ENCODE measurements at regions of chr2 and their contacts with region 1.

Region 1: GRCh38 chr2:29196792-29197788 is 81.9 kb downstream of the CLIP4 start:
- DNase-seq: peak; percentile 65 to 87
- ATAC-seq: peak; percentile 84 to 97 (median 95)
- H3K4me3 ChIP-seq: no peak overlapping the region
- H3K4me3 Mint-ChIP-seq: no peak overlapping the region
- H3K27ac ChIP-seq: no peak overlapping the region
- H3K27ac Mint-ChIP-seq: no peak overlapping the region
- H3K4me1 ChIP-seq: no peaks in the 10 kb centered on the region
- H3K4me1 Mint-ChIP-seq: peaks cover 5 to 6% of the 10 kb centered on the region in 2 donors
- H3K27me3 ChIP-seq: no peaks in the 10 kb centered on the region
- H3K27me3 Mint-ChIP-seq: no peaks in the 10 kb centered on the region
- CTCF ChIP-seq: peak; percentile 85

Region 2: DNA sequence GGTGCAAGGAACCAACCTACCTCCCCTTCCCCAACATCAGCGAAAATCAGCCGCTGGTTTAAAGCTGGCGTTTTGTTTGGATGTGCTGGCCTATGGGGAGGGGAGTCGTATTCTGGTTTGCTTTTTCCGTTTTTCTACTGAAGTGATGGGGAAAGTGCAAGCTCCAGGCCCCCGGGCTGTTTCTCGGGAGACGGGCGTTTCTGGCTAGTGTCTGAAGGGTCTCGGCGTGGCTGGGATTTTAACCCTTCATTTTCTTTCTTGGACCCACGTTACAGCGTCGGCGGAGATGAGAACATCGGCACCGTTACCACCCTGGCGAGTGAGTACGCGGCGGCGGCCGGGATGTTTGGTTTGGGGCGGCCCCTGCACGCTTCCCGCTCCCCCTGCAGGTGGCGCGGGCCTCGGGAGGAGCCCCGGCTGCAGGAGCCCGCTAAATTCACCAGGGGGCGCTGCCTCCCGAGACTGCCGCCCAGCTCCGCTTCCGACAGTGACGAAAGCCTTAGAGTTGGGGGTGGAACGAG is 630.5 kb before region 1 on chr2:
- intact Hi-C with region 1: loop called (anchors 2 kb)
- DNase-seq: peak; percentile 92 to 94
- ATAC-seq: peak; percentile 98 to 99 (median 99)
- H3K4me3 ChIP-seq: peak overlapping the region; percentile 95
- H3K4me3 Mint-ChIP-seq: peak overlapping the region; percentile 91
- H3K27ac ChIP-seq: peak overlapping the region; percentile 17
- H3K27ac Mint-ChIP-seq: peak overlapping the region; percentile 68 to 93
- H3K4me1 ChIP-seq: peaks cover 14% of the 10 kb centered on the region
- H3K4me1 Mint-ChIP-seq: peaks cover 5 to 9% of the 10 kb centered on the region in 2 donors
- H3K27me3 ChIP-seq: no peaks in the 10 kb centered on the region
- H3K27me3 Mint-ChIP-seq: peaks cover 0 to 11% of the 10 kb centered on the region in 2 donors
- CTCF ChIP-seq: peak; percentile 99

Region 3: DNA sequence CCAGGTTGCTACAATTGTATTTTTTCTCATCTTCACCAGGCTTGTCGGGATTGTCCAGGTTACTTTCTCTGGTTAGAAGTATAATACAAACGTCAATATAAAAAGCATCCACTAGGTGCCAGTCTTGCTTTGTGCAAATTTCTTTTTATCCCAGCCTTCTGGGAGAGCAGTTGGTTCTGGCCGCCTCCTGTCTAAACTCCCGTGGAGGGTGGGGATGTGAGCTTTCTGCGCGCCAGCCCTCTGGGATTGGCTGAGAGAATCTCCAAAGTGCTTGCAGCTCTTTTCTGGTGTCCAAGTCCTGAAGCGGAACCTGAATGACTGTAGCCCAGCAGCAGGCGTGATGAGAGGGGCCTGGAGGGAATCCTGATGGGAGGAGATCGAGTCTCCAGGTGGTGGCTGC is 238.4 kb before region 1 on chr2:
- intact Hi-C with region 1: loop called (anchors 1 kb)
- DNase-seq: peak; percentile 25 to 78
- ATAC-seq: peak; percentile 63 to 94 (median 74)
- H3K4me3 ChIP-seq: no peak overlapping the region
- H3K4me3 Mint-ChIP-seq: no peak overlapping the region
- H3K27ac ChIP-seq: no peak overlapping the region
- H3K27ac Mint-ChIP-seq: peak overlapping the region in 1 of 2 donors; percentile 25
- H3K4me1 ChIP-seq: peaks cover 6% of the 10 kb centered on the region
- H3K4me1 Mint-ChIP-seq: peaks cover 6 to 12% of the 10 kb centered on the region in 2 donors
- H3K27me3 ChIP-seq: no peaks in the 10 kb centered on the region
- H3K27me3 Mint-ChIP-seq: peaks cover 0 to 3% of the 10 kb centered on the region in 2 donors
- CTCF ChIP-seq: peak; percentile 82

Region 4: DNA sequence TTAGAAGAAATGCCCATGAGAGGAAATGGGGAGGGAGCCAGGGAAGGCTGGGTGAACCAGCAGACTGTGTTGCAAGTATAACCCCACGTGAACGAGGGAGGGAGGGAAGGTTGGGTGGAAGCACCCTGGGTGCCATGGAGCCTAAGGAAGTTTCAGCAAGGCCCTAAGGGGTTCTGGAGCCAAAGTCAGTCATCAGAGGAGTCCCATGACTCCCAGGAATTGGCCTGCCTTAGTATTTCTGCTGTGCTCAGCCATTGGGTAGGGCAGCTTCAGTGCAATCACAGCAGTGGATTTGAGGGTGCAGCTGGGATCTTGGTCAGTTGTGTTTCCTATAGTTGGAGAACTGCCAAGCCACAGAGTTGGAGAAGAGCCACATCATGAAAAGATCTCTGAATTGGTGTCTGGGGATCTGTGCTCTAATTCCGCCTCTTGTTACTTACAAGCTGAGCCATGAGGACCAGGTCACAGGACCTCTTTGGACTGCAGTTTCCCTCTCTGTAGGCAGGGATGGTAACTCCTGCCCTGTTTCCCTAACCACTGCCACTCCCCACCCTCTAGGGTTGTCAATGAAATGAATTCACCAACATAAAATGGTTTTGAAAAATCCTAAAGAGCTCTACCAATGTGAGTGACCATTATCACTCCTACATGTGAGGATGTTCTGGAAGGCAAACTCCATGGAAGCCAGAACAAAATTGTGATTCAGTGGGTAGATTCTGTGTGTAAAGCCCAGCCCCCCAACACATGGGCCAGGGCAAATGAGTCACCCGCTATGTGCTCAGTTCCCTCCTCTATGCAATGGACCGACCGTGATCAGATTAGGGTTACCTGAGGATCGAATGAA is 27.0 kb after region 1 on chr2:
- intact Hi-C with region 1: no loop called
- DNase-seq: no peak
- ATAC-seq: no peak
- H3K4me3 ChIP-seq: no peak overlapping the region
- H3K4me3 Mint-ChIP-seq: no peak overlapping the region
- H3K27ac ChIP-seq: no peak overlapping the region
- H3K27ac Mint-ChIP-seq: no peak overlapping the region
- H3K4me1 ChIP-seq: no peaks in the 10 kb centered on the region
- H3K4me1 Mint-ChIP-seq: no peaks in the 10 kb centered on the region
- H3K27me3 ChIP-seq: no peaks in the 10 kb centered on the region
- H3K27me3 Mint-ChIP-seq: no peaks in the 10 kb centered on the region
- CTCF ChIP-seq: no peak

Measured in natural killer cell (primary cell).